ENCODE measurements at regions of chr11 and their contacts with region 1.

Region 1: DNA sequence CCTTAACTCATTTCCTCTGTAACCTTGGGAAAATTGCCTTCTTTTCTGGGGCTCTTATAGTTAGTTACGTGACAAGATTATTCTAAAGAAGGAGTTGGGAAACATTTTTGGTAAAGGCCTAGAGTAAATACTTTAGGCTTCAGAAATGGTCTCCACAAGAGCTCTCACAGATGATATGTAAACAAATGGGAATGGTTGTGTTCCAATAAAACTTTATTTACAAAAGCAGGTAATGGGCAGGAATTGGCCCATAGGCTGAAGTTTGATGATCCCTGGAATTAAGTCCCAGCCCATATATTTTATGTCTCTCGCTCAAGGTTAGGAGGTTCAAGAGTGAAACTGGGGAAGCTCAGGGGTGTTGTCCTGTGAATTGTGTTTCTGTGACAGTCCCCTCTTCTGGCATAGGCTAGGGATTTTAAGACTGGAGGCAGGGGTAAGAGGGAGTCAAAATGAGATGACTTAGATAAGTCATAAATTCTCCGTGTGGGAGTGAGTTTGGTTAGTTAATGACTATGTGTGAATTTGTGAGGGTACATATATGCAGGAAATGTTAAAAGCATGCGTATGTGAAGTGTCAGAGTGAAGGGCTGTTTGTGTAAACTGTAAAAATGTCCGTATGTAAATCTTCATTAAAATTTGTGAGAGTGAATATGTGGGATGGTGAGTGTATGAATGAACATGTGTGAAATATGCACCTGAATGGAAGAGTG is 7.4 kb upstream of the OR52B4 start:
- DNase-seq: no peak
- ATAC-seq: peak; percentile 87
- H3K4me3 Mint-ChIP-seq: no peak overlapping the region
- H3K27ac Mint-ChIP-seq: no peak overlapping the region
- H3K4me1 Mint-ChIP-seq: no peaks in the 10 kb centered on the region
- H3K27me3 Mint-ChIP-seq: peaks cover 1% of the 10 kb centered on the region

Region 2: GRCh38 chr11:6142936-6143335 is 1767.3 kb after region 1 on chr11:
- CTCF ChIA-PET with region 1: no interaction called
- POLR2A ChIA-PET with region 1: interaction called, 13 read pairs
- intact Hi-C with region 1: no loop called
- DNase-seq: no peak
- ATAC-seq: no peak
- H3K4me3 Mint-ChIP-seq: no peak overlapping the region
- H3K27ac Mint-ChIP-seq: no peak overlapping the region
- H3K4me1 Mint-ChIP-seq: no peaks in the 10 kb centered on the region
- H3K27me3 Mint-ChIP-seq: peaks cover 8% of the 10 kb centered on the region